AG04450 (cell line): ENCODE measurements at regions of chr2 and their contacts with region 1.

Region 1: GRCh38 chr2:11778923-11779757 is 32.7 kb downstream of the LPIN1 start:
- DNase-seq: no peak
- H3K4me3 ChIP-seq: no peak overlapping the region
- H3K27ac ChIP-seq: no peak overlapping the region
- H3K27me3 ChIP-seq: no peaks in the 10 kb centered on the region
- CTCF ChIP-seq: peak; percentile 95

Region 2: DNA sequence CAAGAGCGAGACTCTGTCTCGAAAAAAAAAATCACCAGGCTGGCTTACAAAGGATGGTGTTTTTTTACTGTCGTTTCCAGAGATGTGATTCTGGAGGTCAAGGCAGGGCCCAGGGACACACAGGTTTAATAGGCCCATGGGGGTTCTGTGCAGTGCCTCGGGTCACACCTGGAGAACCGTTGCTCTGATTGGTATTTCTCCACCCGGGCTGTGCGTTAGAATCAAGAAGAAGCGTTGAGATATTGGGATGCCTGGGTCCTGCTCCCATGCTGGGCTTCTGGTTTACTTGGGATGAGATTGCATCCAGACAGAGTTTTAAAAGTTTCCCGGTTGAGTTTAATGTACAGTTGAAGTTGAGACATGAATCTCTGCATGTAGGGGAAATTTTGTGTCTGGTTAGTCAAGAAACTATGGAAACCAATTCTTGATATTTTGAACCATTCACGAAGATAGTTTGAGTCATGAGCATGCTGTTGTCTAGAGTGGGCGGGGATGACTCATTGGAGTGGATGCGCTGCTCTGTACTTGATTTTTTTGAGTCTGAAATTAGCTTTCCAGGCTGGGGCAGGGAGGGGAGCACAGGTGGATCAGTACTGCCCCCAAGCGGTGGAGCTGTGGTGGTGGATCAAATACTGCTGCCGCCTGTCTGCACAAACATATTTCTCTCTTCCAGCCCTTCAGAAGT is 195.2 kb before region 1 on chr2:
- CTCF ChIA-PET with region 1: interaction called, 14 read pairs
- POLR2A ChIA-PET with region 1: no interaction called
- DNase-seq: peak; percentile 90
- H3K4me3 ChIP-seq: no peak overlapping the region
- H3K27ac ChIP-seq: peak overlapping the region; percentile 68
- H3K27me3 ChIP-seq: peaks cover 21% of the 10 kb centered on the region
- CTCF ChIP-seq: peak; percentile 95

Region 3: GRCh38 chr2:11688222-11689069 is 90.7 kb before region 1 on chr2:
- CTCF ChIA-PET with region 1: interaction called, 204 read pairs
- POLR2A ChIA-PET with region 1: no interaction called
- DNase-seq: peak; percentile 50
- H3K4me3 ChIP-seq: peak overlapping the region; percentile 39
- H3K27ac ChIP-seq: peak overlapping the region; percentile 39
- H3K27me3 ChIP-seq: peaks cover 21% of the 10 kb centered on the region
- CTCF ChIP-seq: peak; percentile 82

Region 4: GRCh38 chr2:11743846-11744553 is 35.1 kb before region 1 on chr2:
- CTCF ChIA-PET with region 1: interaction called, 26 read pairs
- POLR2A ChIA-PET with region 1: no interaction called
- DNase-seq: peak; percentile 99
- H3K4me3 ChIP-seq: peak overlapping the region; percentile 52
- H3K27ac ChIP-seq: peak overlapping the region; percentile 90
- H3K27me3 ChIP-seq: no peaks in the 10 kb centered on the region
- CTCF ChIP-seq: no peak

Region 5: DNA sequence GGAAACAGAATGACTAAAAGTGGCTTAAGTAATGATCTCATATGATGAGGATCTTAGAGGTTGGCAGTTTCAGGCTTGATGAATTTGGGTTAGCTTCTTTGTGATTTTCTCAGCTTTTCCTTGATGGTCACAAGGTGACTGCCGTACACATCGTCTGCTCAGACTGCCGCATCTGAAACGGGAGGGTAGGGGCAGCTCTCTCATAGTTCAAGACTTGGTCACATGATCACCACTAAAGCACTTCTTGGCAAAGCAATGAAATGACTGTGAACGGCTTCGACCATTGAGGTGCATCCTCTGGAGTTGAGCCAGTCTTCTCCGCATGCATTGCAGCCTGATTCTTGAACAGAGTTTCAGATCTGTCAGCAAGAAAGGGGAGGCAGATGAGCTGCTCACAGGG is 11.1 kb after region 1 on chr2:
- CTCF ChIA-PET with region 1: interaction called, 19 read pairs
- POLR2A ChIA-PET with region 1: no interaction called
- DNase-seq: no peak
- H3K4me3 ChIP-seq: no peak overlapping the region
- H3K27ac ChIP-seq: no peak overlapping the region
- H3K27me3 ChIP-seq: no peaks in the 10 kb centered on the region
- CTCF ChIP-seq: no peak